ENCODE measurements at regions of chr15 and their contacts with region 1.

Region 1: GRCh38 chr15:63288778-63289378 is 11.5 kb downstream of the APH1B start:
- DNase-seq: peak; percentile 33
- ATAC-seq: peak; percentile 60; the same call in 1 of the 2 replicates
- H3K4me3 ChIP-seq: no peak overlapping the region
- H3K27ac ChIP-seq: no peak overlapping the region
- H3K4me1 ChIP-seq: peaks cover 0 to 7% of the 10 kb centered on the region in 2 experiments; a peak in 2 of 4 replicates
- H3K27me3 ChIP-seq: no peaks in the 10 kb centered on the region
- CTCF ChIP-seq: peak; percentile 51 to 79 (median 73)
- POLR2A ChIP-seq: no peak
- RAD21 ChIP-seq: peak; percentile 85

Region 2: DNA sequence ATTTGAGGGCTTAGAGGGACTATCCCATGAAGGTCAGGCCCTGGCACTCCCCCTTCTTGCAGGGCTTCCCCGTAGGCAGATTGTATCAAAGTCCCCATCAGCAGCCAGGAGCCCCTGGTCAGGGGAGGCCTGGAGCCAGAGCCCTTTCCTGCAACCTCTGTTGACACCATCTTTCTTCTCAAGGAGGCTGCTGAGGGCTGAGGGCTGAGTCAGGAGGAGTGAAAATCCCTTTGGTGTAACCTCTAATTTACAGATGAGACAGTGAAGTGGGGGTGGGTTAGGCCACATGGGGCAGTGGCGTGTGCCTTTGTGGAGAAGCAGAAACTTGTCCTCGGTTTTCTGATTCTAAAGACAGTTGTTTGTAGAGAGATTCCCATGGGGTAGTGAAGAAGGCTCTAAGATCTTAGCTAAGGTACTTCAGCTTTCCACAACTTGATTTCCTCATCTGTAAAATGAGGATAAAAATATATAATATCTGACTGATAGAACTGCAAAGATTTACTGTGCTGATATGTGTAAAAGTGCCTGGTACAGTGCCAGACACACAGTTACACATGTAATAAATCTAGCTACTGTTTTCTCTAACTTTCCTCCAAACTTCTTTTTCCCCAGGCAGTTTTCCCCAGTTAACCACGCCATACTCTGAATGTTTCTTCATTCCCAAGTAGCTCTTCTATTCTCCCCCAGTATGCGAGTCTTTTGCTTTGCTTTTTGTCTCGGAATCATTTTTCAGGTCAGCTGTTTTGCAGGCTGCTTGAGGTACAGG is 495.7 kb before region 1 on chr15:
- CTCF ChIA-PET with region 1: no interaction called
- POLR2A ChIA-PET with region 1: no interaction called
- RAD21 ChIA-PET with region 1: no interaction called
- intact Hi-C with region 1: no loop called
- DNase-seq: no peak
- ATAC-seq: no peak
- H3K4me3 ChIP-seq: no peak overlapping the region
- H3K27ac ChIP-seq: no peak overlapping the region
- H3K4me1 ChIP-seq: no peaks in the 10 kb centered on the region
- H3K27me3 ChIP-seq: no peaks in the 10 kb centered on the region
- CTCF ChIP-seq: no peak
- POLR2A ChIP-seq: no peak
- RAD21 ChIP-seq: no peak

Region 3: GRCh38 chr15:63600616-63601025 is 311.7 kb after region 1 on chr15:
- CTCF ChIA-PET with region 1: no interaction called
- POLR2A ChIA-PET with region 1: no interaction called
- RAD21 ChIA-PET with region 1: no interaction called
- intact Hi-C with region 1: loop called (anchors 5 kb)
- DNase-seq: peak; percentile 79
- ATAC-seq: peak; percentile 82
- H3K4me3 ChIP-seq: peak overlapping the region; percentile 77 to 85
- H3K27ac ChIP-seq: peak overlapping the region; percentile 74
- H3K4me1 ChIP-seq: peaks cover 13 to 31% of the 10 kb centered on the region in 2 experiments; a peak in 3 of 4 replicates
- H3K27me3 ChIP-seq: no peaks in the 10 kb centered on the region
- CTCF ChIP-seq: no peak
- POLR2A ChIP-seq: peak; percentile 83
- RAD21 ChIP-seq: no peak